Naive thymus-derived CD4-positive, alpha-beta T cell (primary cell): ENCODE measurements at regions of chr1 and their contacts with region 1.

Region 1: GRCh38 chr1:168439456-168440375 is 104.1 kb downstream of the XCL2 start:
- DNase-seq: peak; percentile 45 to 86 (median 80)
- ATAC-seq: peak; percentile 95
- H3K4me3 ChIP-seq: peak overlapping the region; percentile 46
- H3K4me3 Mint-ChIP-seq: peak overlapping the region; percentile 48 to 88 (median 79)
- H3K27ac ChIP-seq: peak overlapping the region; percentile 17
- H3K27ac Mint-ChIP-seq: peak overlapping the region; percentile 20 to 91 (median 59)
- H3K4me1 ChIP-seq: peaks cover 28 to 43% of the 10 kb centered on the region in 2 donors
- H3K4me1 Mint-ChIP-seq: peaks cover 32 to 62% (median 45%) of the 10 kb centered on the region in 7 donors
- H3K27me3 ChIP-seq: no peaks in the 10 kb centered on the region
- H3K27me3 Mint-ChIP-seq: peaks cover 0 to 3% (median 0%) of the 10 kb centered on the region in 5 donors

Region 2: GRCh38 chr1:168202941-168203654 is 236.6 kb before region 1 on chr1:
- CTCF ChIA-PET with region 1: no interaction called
- POLR2A ChIA-PET with region 1: no interaction called
- intact Hi-C with region 1: no loop called
- DNase-seq: no peak
- ATAC-seq: no peak
- H3K4me3 ChIP-seq: no peak overlapping the region
- H3K4me3 Mint-ChIP-seq: no peak overlapping the region
- H3K27ac ChIP-seq: no peak overlapping the region
- H3K27ac Mint-ChIP-seq: no peak overlapping the region
- H3K4me1 ChIP-seq: no peaks in the 10 kb centered on the region
- H3K4me1 Mint-ChIP-seq: no peaks in the 10 kb centered on the region
- H3K27me3 ChIP-seq: no peaks in the 10 kb centered on the region
- H3K27me3 Mint-ChIP-seq: no peaks in the 10 kb centered on the region

Region 3: DNA sequence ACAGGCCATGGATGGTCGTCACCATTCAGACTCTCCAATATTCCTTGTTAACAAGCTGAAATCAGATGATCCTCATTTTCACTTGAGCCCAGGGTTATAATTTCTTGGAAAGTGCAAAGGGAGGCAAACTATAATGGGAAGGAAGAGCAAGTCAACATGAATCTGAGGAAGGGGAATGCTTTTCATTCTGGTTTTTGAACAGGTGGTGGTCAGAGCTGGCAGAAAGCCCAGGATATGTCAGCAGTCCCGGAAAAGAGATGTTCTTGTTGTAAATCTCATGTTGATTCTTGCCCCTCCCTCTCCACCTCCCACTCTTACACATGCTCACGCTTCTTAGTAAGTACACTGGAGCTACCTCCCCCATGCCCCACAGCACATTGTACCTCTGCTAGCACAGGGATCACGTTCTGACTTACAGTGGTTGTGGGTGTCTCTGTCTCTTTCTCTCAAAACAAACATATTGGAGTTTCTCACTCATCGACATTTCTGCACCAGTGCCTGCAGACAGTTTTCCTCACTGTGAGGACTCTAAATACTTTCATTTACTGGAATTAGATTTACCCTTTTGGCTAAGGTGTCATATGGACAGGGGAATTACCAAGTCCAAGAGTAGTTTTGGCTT is 26.5 kb after region 1 on chr1:
- CTCF ChIA-PET with region 1: interaction called, 6 read pairs
- POLR2A ChIA-PET with region 1: interaction called, 4 read pairs
- intact Hi-C with region 1: loop called (anchors 1 to 2 kb)
- DNase-seq: peak in 4 of 9 donors; percentile 29 to 39 (median 32)
- ATAC-seq: peak; percentile 54
- H3K4me3 ChIP-seq: no peak overlapping the region
- H3K4me3 Mint-ChIP-seq: peak overlapping the region; percentile 44 to 72 (median 56)
- H3K27ac ChIP-seq: no peak overlapping the region
- H3K27ac Mint-ChIP-seq: peak overlapping the region; percentile 66 to 89 (median 80)
- H3K4me1 ChIP-seq: peaks cover 40 to 51% of the 10 kb centered on the region in 2 donors
- H3K4me1 Mint-ChIP-seq: peaks cover 47 to 66% (median 60%) of the 10 kb centered on the region in 7 donors
- H3K27me3 ChIP-seq: no peaks in the 10 kb centered on the region
- H3K27me3 Mint-ChIP-seq: no peaks in the 10 kb centered on the region

Region 4: DNA sequence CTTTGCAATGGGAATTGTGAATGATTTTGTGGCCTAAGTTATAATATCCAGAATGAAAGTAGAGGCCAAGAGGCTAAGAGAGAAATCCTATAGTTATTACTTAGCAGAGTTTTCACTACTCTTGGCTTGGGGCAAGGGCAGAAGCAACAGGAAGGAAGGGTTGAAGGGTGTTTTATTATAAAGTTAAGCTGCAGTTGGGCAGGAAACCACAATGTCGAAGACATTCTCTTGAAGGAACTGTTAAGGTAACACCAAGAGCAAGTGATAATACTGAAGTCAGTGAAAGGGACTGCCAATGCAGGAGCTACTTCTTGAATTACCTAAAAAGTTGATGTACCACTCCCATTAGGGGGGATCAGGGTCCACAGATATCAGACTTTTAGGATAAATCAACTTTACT is 95.8 kb after region 1 on chr1:
- CTCF ChIA-PET with region 1: interaction called, 8 read pairs
- POLR2A ChIA-PET with region 1: interaction called, 7 read pairs
- intact Hi-C with region 1: loop called in 1 of 2 experiments (anchors 2 kb)
- DNase-seq: peak in 7 of 9 donors; percentile 40 to 66 (median 56)
- ATAC-seq: peak; percentile 89
- H3K4me3 ChIP-seq: peak overlapping the region; percentile 5
- H3K4me3 Mint-ChIP-seq: peak overlapping the region; percentile 60 to 86 (median 76)
- H3K27ac ChIP-seq: peak overlapping the region; percentile 43
- H3K27ac Mint-ChIP-seq: peak overlapping the region; percentile 83 to 96 (median 89)
- H3K4me1 ChIP-seq: peaks cover 55 to 59% of the 10 kb centered on the region in 2 donors
- H3K4me1 Mint-ChIP-seq: peaks cover 59 to 93% (median 86%) of the 10 kb centered on the region in 7 donors
- H3K27me3 ChIP-seq: no peaks in the 10 kb centered on the region
- H3K27me3 Mint-ChIP-seq: no peaks in the 10 kb centered on the region

Region 5: DNA sequence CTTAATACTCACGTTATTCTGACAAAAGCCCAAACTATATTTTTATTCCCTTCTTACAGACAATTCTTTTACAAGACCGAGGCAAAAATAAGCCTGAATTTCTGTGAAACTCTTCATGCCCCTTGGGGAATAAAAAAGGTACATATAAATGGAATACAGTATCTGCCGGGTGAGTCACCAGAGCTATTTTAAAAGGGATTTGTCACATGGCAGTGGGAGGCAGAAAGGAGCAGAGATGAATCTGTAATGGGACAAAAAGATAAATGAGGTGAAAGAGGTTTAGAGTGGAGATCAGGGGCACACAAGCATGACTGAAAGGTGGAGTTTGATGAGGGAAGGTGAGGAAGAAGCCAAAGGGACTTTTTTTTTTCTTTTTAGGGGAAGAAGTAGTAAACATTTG is 145.5 kb after region 1 on chr1:
- CTCF ChIA-PET with region 1: interaction called, 11 read pairs
- POLR2A ChIA-PET with region 1: no interaction called
- intact Hi-C with region 1: no loop called
- DNase-seq: no peak
- ATAC-seq: no peak
- H3K4me3 ChIP-seq: no peak overlapping the region
- H3K4me3 Mint-ChIP-seq: no peak overlapping the region
- H3K27ac ChIP-seq: no peak overlapping the region
- H3K27ac Mint-ChIP-seq: no peak overlapping the region
- H3K4me1 ChIP-seq: no peaks in the 10 kb centered on the region
- H3K4me1 Mint-ChIP-seq: no peaks in the 10 kb centered on the region
- H3K27me3 ChIP-seq: no peaks in the 10 kb centered on the region
- H3K27me3 Mint-ChIP-seq: peaks cover 0 to 2% (median 0%) of the 10 kb centered on the region in 5 donors

Region 6: GRCh38 chr1:169044296-169044695 is 604.6 kb after region 1 on chr1:
- CTCF ChIA-PET with region 1: no interaction called
- POLR2A ChIA-PET with region 1: no interaction called
- intact Hi-C with region 1: loop called in 1 of 2 experiments (anchors 5 kb)
- DNase-seq: peak in 8 of 9 donors; percentile 10 to 65 (median 56)
- ATAC-seq: peak; percentile 93
- H3K4me3 ChIP-seq: peak overlapping the region; percentile 0
- H3K4me3 Mint-ChIP-seq: peak overlapping the region; percentile 59 to 84 (median 72)
- H3K27ac ChIP-seq: no peak overlapping the region
- H3K27ac Mint-ChIP-seq: peak overlapping the region; percentile 16 to 85 (median 73)
- H3K4me1 ChIP-seq: peaks cover 16 to 30% of the 10 kb centered on the region in 2 donors
- H3K4me1 Mint-ChIP-seq: peaks cover 25 to 64% (median 49%) of the 10 kb centered on the region in 7 donors
- H3K27me3 ChIP-seq: no peaks in the 10 kb centered on the region
- H3K27me3 Mint-ChIP-seq: no peaks in the 10 kb centered on the region

Region 7: GRCh38 chr1:169348383-169349036 is 908.8 kb after region 1 on chr1:
- CTCF ChIA-PET with region 1: interaction called, 7 read pairs
- POLR2A ChIA-PET with region 1: no interaction called
- intact Hi-C with region 1: loop called (anchors 1 kb)
- DNase-seq: peak in 7 of 9 donors; percentile 12 to 56 (median 39)
- ATAC-seq: peak; percentile 60
- H3K4me3 ChIP-seq: no peak overlapping the region
- H3K4me3 Mint-ChIP-seq: no peak overlapping the region
- H3K27ac ChIP-seq: no peak overlapping the region
- H3K27ac Mint-ChIP-seq: no peak overlapping the region
- H3K4me1 ChIP-seq: no peaks in the 10 kb centered on the region
- H3K4me1 Mint-ChIP-seq: peaks cover 0 to 18% (median 8%) of the 10 kb centered on the region in 7 donors
- H3K27me3 ChIP-seq: no peaks in the 10 kb centered on the region
- H3K27me3 Mint-ChIP-seq: peaks cover 0 to 3% (median 0%) of the 10 kb centered on the region in 5 donors